Activated T-helper 1 cell treated with anti-CD3 and anti-CD28 coated beads, Interleukin-12 subunit alpha, Interleukin-12 subunit beta, Interleukin-2, Interleukin-4 antibody, amounts not matched to agents 30 ng/mL and 10 ng/mL and 1 ng/mL, durations not matched to agents 14 hours and 24 hours and 36 hours (primary cell): ENCODE measurements at regions of chr22 and their contacts with region 1.

Region 1: GRCh38 chr22:37267135-37267587 is 15.1 kb upstream of the CYTH4 start:
- DNase-seq: peak; percentile 74
- H3K4me3 Mint-ChIP-seq: peak overlapping the region; percentile 86
- H3K27ac Mint-ChIP-seq: peak overlapping the region; percentile 96
- H3K4me1 Mint-ChIP-seq: peaks cover 24% of the 10 kb centered on the region
- H3K27me3 Mint-ChIP-seq: peaks cover 4% of the 10 kb centered on the region

Region 2: DNA sequence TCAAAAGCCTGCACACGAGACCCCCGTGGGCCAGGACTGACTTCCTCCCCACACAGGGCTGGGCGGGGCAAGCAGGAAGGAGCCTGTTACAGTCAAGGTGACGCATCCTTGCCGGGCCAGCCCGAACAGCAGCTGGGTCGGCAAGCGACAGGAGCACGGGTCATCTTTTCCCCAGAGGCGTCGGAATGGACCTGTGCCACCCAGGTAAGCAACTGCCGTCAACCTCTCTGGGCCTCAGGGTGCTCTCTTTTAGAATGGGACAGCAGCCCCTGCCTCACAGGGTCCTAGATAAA is 15.2 kb after region 1 on chr22 and contains the start of gene CYTH4:
- intact Hi-C with region 1: loop called (anchors 1 kb)
- DNase-seq: peak; percentile 74
- H3K4me3 Mint-ChIP-seq: peak within 1 kb of the TSS; percentile 88
- H3K27ac Mint-ChIP-seq: peak within 1 kb of the TSS; percentile 99
- H3K4me1 Mint-ChIP-seq: peaks cover 65% of the 10 kb centered on the region
- H3K27me3 Mint-ChIP-seq: no peaks in the 10 kb centered on the region
- total RNA-seq, gene CYTH4: 49.5 and 57.1 TPM in 2 replicates

Region 3: GRCh38 chr22:37428649-37429586 is 161.8 kb after region 1 on chr22:
- intact Hi-C with region 1: loop called (anchors 2 kb)
- DNase-seq: peak; percentile 28
- H3K4me3 Mint-ChIP-seq: no peak overlapping the region
- H3K27ac Mint-ChIP-seq: no peak overlapping the region
- H3K4me1 Mint-ChIP-seq: peaks cover 24% of the 10 kb centered on the region
- H3K27me3 Mint-ChIP-seq: peaks cover 42% of the 10 kb centered on the region

Region 4: GRCh38 chr22:37457093-37457893 is 190.1 kb after region 1 on chr22:
- intact Hi-C with region 1: loop called (anchors 1 kb)
- DNase-seq: peak; percentile 75
- H3K4me3 Mint-ChIP-seq: no peak overlapping the region
- H3K27ac Mint-ChIP-seq: no peak overlapping the region
- H3K4me1 Mint-ChIP-seq: peaks cover 18% of the 10 kb centered on the region
- H3K27me3 Mint-ChIP-seq: no peaks in the 10 kb centered on the region